Caco-2 (cell line): ENCODE measurements at regions of chr7 and their contacts with region 1.

Region 1: GRCh38 chr7:65373608-65374351 is at the start of gene ZNF92:
- DNase-seq: peak; percentile 98
- H3K4me3 ChIP-seq: peak within 1 kb of the TSS; percentile 64
- H3K4me3 Mint-ChIP-seq: peak within 1 kb of the TSS; percentile 95
- H3K27ac Mint-ChIP-seq: peak within 1 kb of the TSS; percentile 98
- H3K4me1 ChIP-seq: no peaks in the 10 kb centered on the region
- H3K4me1 Mint-ChIP-seq: no peaks in the 10 kb centered on the region
- H3K27me3 ChIP-seq: no peaks in the 10 kb centered on the region
- H3K27me3 Mint-ChIP-seq: no peaks in the 10 kb centered on the region
- CTCF ChIP-seq: no peak
- total RNA-seq, gene ZNF92: 16.0 and 18.0 TPM in 2 replicates

Region 2: GRCh38 chr7:65325793-65326432 is 47.9 kb before region 1 on chr7:
- CTCF ChIA-PET with region 1: no interaction called
- POLR2A ChIA-PET with region 1: interaction called, 11 read pairs
- intact Hi-C with region 1: no loop called
- DNase-seq: no peak
- H3K4me3 ChIP-seq: no peak overlapping the region
- H3K4me3 Mint-ChIP-seq: no peak overlapping the region
- H3K27ac Mint-ChIP-seq: no peak overlapping the region
- H3K4me1 ChIP-seq: no peaks in the 10 kb centered on the region
- H3K4me1 Mint-ChIP-seq: no peaks in the 10 kb centered on the region
- H3K27me3 ChIP-seq: no peaks in the 10 kb centered on the region
- H3K27me3 Mint-ChIP-seq: no peaks in the 10 kb centered on the region
- CTCF ChIP-seq: no peak

Region 3: DNA sequence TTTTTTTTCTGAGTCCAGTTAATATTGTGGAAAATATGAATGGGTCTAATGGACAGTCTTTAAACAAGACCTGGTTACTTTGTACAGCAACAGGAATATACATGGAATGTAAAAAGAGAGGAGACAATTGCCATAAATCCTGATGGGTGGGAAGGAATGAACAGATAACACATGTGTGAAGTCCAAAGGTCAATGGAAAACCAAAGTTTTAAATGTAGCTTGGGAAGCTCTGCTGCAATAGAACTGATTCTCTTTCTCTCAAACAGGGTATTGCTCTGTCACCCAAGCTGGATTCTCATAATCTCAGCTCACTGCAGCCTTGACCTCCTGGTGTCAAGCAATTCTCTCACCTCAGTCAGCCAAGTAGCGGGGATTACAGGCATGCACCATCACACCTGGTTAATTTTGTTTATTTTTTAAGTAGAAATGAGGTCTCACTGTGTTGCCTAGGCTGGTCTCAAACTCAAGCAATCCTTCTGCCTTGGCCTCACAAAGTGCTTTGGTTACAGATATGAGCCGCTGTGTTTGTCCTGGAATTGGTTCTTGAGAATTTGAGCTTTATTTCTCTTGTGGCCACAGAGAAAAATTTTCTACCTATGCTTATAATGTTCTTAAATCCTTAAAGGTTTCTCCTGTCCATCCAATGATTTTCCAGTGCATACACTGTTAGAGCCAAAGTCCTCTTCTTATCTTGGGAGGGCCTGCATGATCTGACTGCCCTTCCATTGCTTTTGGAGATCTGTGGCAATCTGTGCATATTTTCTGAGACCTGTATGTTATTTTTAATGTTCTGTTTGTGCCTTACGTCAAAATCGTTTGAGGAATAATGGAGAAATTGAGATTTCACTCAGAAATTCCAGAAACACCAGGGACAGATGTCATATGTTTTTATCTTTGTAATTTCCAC is 30.8 kb before region 1 on chr7:
- CTCF ChIA-PET with region 1: no interaction called
- POLR2A ChIA-PET with region 1: interaction called, 3 read pairs
- intact Hi-C with region 1: loop called (anchors 1 kb)
- DNase-seq: peak in 1 of 2 experiments; percentile 24
- H3K4me3 ChIP-seq: no peak overlapping the region
- H3K4me3 Mint-ChIP-seq: peak overlapping the region; percentile 47
- H3K27ac Mint-ChIP-seq: no peak overlapping the region
- H3K4me1 ChIP-seq: peaks cover 25% of the 10 kb centered on the region
- H3K4me1 Mint-ChIP-seq: peaks cover 12% of the 10 kb centered on the region
- H3K27me3 ChIP-seq: no peaks in the 10 kb centered on the region
- H3K27me3 Mint-ChIP-seq: no peaks in the 10 kb centered on the region
- CTCF ChIP-seq: no peak

Region 4: DNA sequence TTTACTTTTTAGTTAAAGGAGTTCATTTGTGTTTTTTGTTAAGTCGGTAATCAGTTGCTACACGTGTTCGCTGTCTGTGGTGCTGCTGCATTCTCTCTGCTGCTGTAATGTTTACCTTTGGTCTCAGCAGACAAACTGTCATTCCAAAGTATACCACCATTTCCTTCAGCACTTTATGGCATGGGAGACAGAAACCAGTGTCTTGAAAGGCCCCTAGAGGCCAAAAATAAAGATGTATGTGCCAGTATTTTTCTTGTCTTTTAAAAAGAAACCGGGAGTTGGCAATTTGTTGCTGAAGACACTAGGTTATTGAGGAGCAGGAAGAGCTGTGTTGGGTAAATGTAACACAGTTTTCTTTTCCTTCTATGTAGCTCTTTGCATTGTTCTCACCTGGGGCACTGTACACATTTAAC is 24.0 kb after region 1 on chr7:
- CTCF ChIA-PET with region 1: no interaction called
- POLR2A ChIA-PET with region 1: interaction called, 6 read pairs
- intact Hi-C with region 1: loop called (anchors 1 kb)
- DNase-seq: peak; percentile 63 to 69
- H3K4me3 ChIP-seq: no peak overlapping the region
- H3K4me3 Mint-ChIP-seq: peak overlapping the region; percentile 22
- H3K27ac Mint-ChIP-seq: no peak overlapping the region
- H3K4me1 ChIP-seq: peaks cover 17% of the 10 kb centered on the region
- H3K4me1 Mint-ChIP-seq: peaks cover 14% of the 10 kb centered on the region
- H3K27me3 ChIP-seq: no peaks in the 10 kb centered on the region
- H3K27me3 Mint-ChIP-seq: no peaks in the 10 kb centered on the region
- CTCF ChIP-seq: peak; percentile 43 to 55

Region 5: GRCh38 chr7:65409363-65409762 is 35.6 kb after region 1 on chr7:
- CTCF ChIA-PET with region 1: no interaction called
- POLR2A ChIA-PET with region 1: no interaction called
- intact Hi-C with region 1: no loop called
- DNase-seq: no peak
- H3K4me3 ChIP-seq: no peak overlapping the region
- H3K4me3 Mint-ChIP-seq: no peak overlapping the region
- H3K27ac Mint-ChIP-seq: no peak overlapping the region
- H3K4me1 ChIP-seq: no peaks in the 10 kb centered on the region
- H3K4me1 Mint-ChIP-seq: no peaks in the 10 kb centered on the region
- H3K27me3 ChIP-seq: no peaks in the 10 kb centered on the region
- H3K27me3 Mint-ChIP-seq: no peaks in the 10 kb centered on the region
- CTCF ChIP-seq: no peak

Region 6: GRCh38 chr7:65438598-65438997 is 64.8 kb after region 1 on chr7:
- CTCF ChIA-PET with region 1: no interaction called
- POLR2A ChIA-PET with region 1: no interaction called
- intact Hi-C with region 1: no loop called
- DNase-seq: no peak
- H3K4me3 ChIP-seq: no peak overlapping the region
- H3K4me3 Mint-ChIP-seq: no peak overlapping the region
- H3K27ac Mint-ChIP-seq: no peak overlapping the region
- H3K4me1 ChIP-seq: no peaks in the 10 kb centered on the region
- H3K4me1 Mint-ChIP-seq: no peaks in the 10 kb centered on the region
- H3K27me3 ChIP-seq: no peaks in the 10 kb centered on the region
- H3K27me3 Mint-ChIP-seq: peaks cover 5% of the 10 kb centered on the region
- CTCF ChIP-seq: no peak

Region 7: GRCh38 chr7:65503434-65504158 is 129.8 kb after region 1 on chr7:
- CTCF ChIA-PET with region 1: no interaction called
- POLR2A ChIA-PET with region 1: no interaction called
- intact Hi-C with region 1: no loop called
- DNase-seq: no peak
- H3K4me3 ChIP-seq: no peak overlapping the region
- H3K4me3 Mint-ChIP-seq: no peak overlapping the region
- H3K27ac Mint-ChIP-seq: no peak overlapping the region
- H3K4me1 ChIP-seq: no peaks in the 10 kb centered on the region
- H3K4me1 Mint-ChIP-seq: no peaks in the 10 kb centered on the region
- H3K27me3 ChIP-seq: no peaks in the 10 kb centered on the region
- H3K27me3 Mint-ChIP-seq: no peaks in the 10 kb centered on the region
- CTCF ChIP-seq: no peak

Region 8: GRCh38 chr7:65750511-65751344 is 376.9 kb after region 1 on chr7:
- CTCF ChIA-PET with region 1: no interaction called
- POLR2A ChIA-PET with region 1: no interaction called
- intact Hi-C with region 1: no loop called
- DNase-seq: peak; percentile 90 to 95
- H3K4me3 ChIP-seq: peak overlapping the region; percentile 65
- H3K4me3 Mint-ChIP-seq: peak overlapping the region; percentile 90
- H3K27ac Mint-ChIP-seq: peak overlapping the region; percentile 89
- H3K4me1 ChIP-seq: peaks cover 15% of the 10 kb centered on the region
- H3K4me1 Mint-ChIP-seq: peaks cover 4% of the 10 kb centered on the region
- H3K27me3 ChIP-seq: no peaks in the 10 kb centered on the region
- H3K27me3 Mint-ChIP-seq: no peaks in the 10 kb centered on the region
- CTCF ChIP-seq: no peak